Sigmoid colon (tissue), 7 donors: ENCODE measurements at regions of chr7 and their contacts with region 1.

Region 1: GRCh38 chr7:16431646-16432424 is 10.5 kb upstream of the CRPPA start:
- DNase-seq: no peak
- H3K4me3 ChIP-seq: no peak overlapping the region
- H3K27ac ChIP-seq: no peak overlapping the region
- H3K4me1 ChIP-seq: no peaks in the 10 kb centered on the region
- H3K27me3 ChIP-seq: no peaks in the 10 kb centered on the region
- CTCF ChIP-seq: peak in 1 of 4 experiments; percentile 23
- EP300 ChIP-seq: no peak
- POLR2A ChIP-seq: no peak

Region 2: GRCh38 chr7:16564909-16565426 is 133.1 kb after region 1 on chr7:
- intact Hi-C with region 1: loop called (anchors 5 kb)
- DNase-seq: no peak
- H3K4me3 ChIP-seq: no peak overlapping the region
- H3K27ac ChIP-seq: no peak overlapping the region
- H3K4me1 ChIP-seq: peaks cover 0 to 14% (median 0%) of the 10 kb centered on the region in 4 donors
- H3K27me3 ChIP-seq: no peaks in the 10 kb centered on the region
- CTCF ChIP-seq: peak in 3 of 4 experiments; percentile 63 to 80 (median 64)
- EP300 ChIP-seq: no peak
- POLR2A ChIP-seq: no peak